Breast epithelium (tissue), 4 donors: ENCODE measurements at regions of chr12 and their contacts with region 1.

Region 1: DNA sequence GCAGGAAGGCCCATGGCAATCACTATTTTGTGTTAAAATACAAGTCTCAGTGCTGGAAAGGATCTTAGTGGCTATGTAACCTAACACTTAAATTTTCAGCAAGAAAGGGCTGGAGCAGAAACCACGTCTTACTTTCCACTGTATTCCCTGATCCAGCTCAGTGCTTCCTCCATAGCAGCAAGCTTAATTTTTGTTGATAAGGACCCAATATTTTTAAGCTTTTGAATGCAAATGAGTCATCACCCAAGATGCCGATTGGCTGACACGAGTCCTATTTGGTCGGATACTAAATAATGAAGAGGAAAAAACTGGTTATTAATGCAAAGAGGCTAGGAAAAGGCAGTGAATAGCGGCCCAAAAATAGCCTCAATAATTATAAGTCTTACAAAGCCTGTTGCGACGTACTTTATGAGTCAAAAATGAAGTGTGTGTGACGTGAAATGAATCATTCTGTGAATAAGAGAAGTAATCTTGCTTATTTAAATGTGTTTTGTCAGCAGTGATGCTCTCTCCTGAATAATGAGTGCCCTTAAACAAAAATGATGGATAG is 46.9 kb upstream of the IGF1 start:
- DNase-seq: no peak
- H3K4me3 ChIP-seq: no peak overlapping the region
- H3K27ac ChIP-seq: no peak overlapping the region
- H3K4me1 ChIP-seq: no peaks in the 10 kb centered on the region
- H3K27me3 ChIP-seq: no peaks in the 10 kb centered on the region
- CTCF ChIP-seq: no peak
- POLR2A ChIP-seq: no peak

Region 2: DNA sequence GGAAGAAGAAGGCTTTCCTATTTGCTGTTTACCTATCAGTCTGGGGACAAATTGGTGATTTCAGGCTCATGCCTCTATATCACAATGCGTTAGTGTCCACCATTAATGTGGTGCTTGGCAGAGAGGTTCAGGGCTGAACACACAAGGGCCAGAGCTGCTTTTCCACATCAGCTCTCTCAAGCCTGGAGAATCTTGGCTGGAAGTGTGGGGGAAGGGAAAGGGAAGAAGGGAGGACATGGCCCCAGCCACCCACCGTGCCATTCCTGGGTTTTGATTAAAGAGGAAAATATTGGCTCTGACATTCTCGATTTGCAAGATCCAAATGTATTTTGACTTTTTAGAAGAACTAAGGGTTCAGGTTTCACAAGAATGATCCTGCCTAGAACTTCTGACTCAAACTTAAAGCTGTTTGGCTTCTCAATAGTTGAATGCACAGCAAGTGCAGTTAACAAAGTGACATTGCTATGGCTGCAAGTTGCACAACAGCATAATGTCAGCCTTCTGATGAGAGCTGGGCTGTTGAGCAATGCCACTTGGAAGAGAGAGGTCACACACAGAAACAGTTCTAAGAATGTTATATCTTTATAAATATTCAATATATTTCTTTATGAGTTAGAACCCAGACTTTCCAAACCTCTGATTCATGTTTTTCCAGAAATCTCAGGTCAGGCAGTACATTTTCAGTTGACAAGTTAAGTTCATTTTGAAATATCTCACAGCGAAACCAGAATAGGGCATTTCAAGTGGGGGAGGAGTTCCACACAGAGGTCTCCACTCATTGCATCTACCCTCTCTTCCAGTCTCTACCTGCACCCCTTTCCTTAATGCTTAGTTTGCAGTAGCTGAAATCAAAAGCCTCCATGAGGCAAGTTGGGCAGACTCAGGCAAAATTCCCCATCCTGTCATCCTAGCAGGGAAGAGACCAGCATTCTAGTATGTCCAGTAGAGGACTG is 72.2 kb before region 1 on chr12:
- intact Hi-C with region 1: loop called (anchors 2 kb)
- DNase-seq: no peak
- H3K4me3 ChIP-seq: no peak overlapping the region
- H3K27ac ChIP-seq: peak overlapping the region in 1 of 2 donors; percentile 74
- H3K4me1 ChIP-seq: no peaks in the 10 kb centered on the region
- H3K27me3 ChIP-seq: no peaks in the 10 kb centered on the region
- CTCF ChIP-seq: no peak
- POLR2A ChIP-seq: no peak

Region 3: GRCh38 chr12:103036581-103037214 is 509.5 kb after region 1 on chr12:
- intact Hi-C with region 1: no loop called
- DNase-seq: no peak
- H3K4me3 ChIP-seq: no peak overlapping the region
- H3K27ac ChIP-seq: no peak overlapping the region
- H3K4me1 ChIP-seq: no peaks in the 10 kb centered on the region
- H3K27me3 ChIP-seq: no peaks in the 10 kb centered on the region
- CTCF ChIP-seq: no peak
- POLR2A ChIP-seq: no peak